ENCODE measurements at regions of chr10 and their contacts with region 1.

Region 1: GRCh38 chr10:96089670-96090462 is 40.2 kb upstream of the ZNF518A start:
- DNase-seq: peak; percentile 94 to 98 (median 96)
- ATAC-seq: peak; percentile 97
- H3K4me3 ChIP-seq: peak overlapping the region; percentile 51 to 75
- H3K27ac ChIP-seq: peak overlapping the region; percentile 93 to 95
- H3K4me1 ChIP-seq: peaks cover 0 to 7% of the 10 kb centered on the region in 2 donors
- H3K27me3 ChIP-seq: peaks cover 29 to 30% of the 10 kb centered on the region in 2 donors
- CTCF ChIP-seq: no peak

Region 2: GRCh38 chr10:96129387-96130325 is 39.8 kb after region 1 on chr10 and contains the start of gene ZNF518A:
- intact Hi-C with region 1: loop called in 1 of 2 experiments (anchors 5 kb)
- DNase-seq: peak; percentile 93 to 98 (median 96)
- ATAC-seq: peak; percentile 98
- H3K4me3 ChIP-seq: peak within 1 kb of the TSS; percentile 63 to 78
- H3K27ac ChIP-seq: peak within 1 kb of the TSS; percentile 93 to 99
- H3K4me1 ChIP-seq: peaks cover 7 to 9% of the 10 kb centered on the region in 2 donors
- H3K27me3 ChIP-seq: peaks cover 26 to 43% of the 10 kb centered on the region in 2 donors
- CTCF ChIP-seq: no peak
- polyA plus RNA-seq, gene ZNF518A: 47.5 to 55.1 (median 50.8) TPM

Measured in left lung (tissue), 14 donors.